Activated CD4-positive, alpha-beta T cell treated with anti-CD3 and anti-CD28 coated beads for 36 hours (primary cell): ENCODE measurements at regions of chr1 and their contacts with region 1.

Region 1: GRCh38 chr1:44807262-44808062 is at the start of gene DYNLT4:
- DNase-seq: peak; percentile 94
- ATAC-seq: peak; percentile 57
- H3K4me3 Mint-ChIP-seq: peak within 1 kb of the TSS; percentile 87
- H3K27ac Mint-ChIP-seq: peak within 1 kb of the TSS; percentile 99
- H3K4me1 Mint-ChIP-seq: peaks cover 92% of the 10 kb centered on the region
- H3K27me3 Mint-ChIP-seq: no peaks in the 10 kb centered on the region
- total RNA-seq, gene DYNLT4: 0.32 TPM in 1 of 2 experiments, not detected in the other

Region 2: DNA sequence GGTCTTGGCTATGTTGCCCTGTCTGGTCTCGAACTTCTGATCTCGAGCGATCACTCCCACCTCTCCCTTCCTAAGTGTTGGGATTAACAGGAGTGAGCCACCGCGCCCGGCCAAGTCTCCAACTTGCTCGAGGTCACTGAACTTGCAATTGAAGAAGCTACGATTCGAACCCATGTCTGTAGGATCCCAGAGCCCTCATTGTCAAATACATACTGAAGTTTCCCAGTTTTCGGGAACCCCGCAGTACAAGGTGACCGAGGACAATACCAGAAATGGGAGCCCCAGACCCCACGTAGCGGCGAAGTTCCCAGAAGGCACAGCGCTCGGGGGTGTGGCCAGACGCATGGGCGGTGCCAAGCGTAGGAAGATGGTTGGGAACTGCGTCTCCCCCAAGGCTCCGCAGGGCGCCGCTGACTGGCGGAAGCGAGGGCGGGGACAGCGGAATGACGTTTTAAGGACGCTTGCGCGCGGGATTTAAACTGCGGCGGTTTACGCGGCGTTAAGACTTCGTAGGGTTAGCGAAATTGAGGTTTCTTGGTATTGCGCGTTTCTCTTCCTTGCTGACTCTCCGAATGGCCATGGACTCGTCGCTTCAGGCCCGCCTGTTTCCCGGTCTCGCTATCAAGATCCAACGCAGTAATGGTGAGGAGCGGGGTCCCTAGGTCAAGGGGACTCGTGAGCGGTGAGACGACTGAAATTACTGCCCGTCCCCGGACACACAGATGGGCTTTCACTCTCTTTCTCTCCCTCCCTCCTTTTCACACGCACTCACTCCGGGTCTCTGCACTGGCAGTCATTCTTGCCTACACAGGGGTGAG is 67.9 kb before region 1 on chr1 and contains the start of gene KIF2C:
- CTCF ChIA-PET with region 1: interaction called, 3 read pairs
- POLR2A ChIA-PET with region 1: interaction called, 6 read pairs
- intact Hi-C with region 1: loop called in 1 of 2 experiments (anchors 1 kb)
- DNase-seq: peak; percentile 99
- ATAC-seq: peak; percentile 98
- H3K4me3 Mint-ChIP-seq: peak within 1 kb of the TSS; percentile 98
- H3K27ac Mint-ChIP-seq: peak within 1 kb of the TSS; percentile 94
- H3K4me1 Mint-ChIP-seq: peaks cover 26% of the 10 kb centered on the region
- H3K27me3 Mint-ChIP-seq: no peaks in the 10 kb centered on the region
- total RNA-seq, gene KIF2C: 101 to 119 TPM

Region 3: GRCh38 chr1:44780583-44781121 is 26.8 kb before region 1 on chr1:
- CTCF ChIA-PET with region 1: interaction called, 12 read pairs
- POLR2A ChIA-PET with region 1: interaction called, 26 read pairs
- intact Hi-C with region 1: loop called in 1 of 2 experiments (anchors 2 kb)
- DNase-seq: no peak
- ATAC-seq: no peak
- H3K4me3 Mint-ChIP-seq: no peak overlapping the region
- H3K27ac Mint-ChIP-seq: no peak overlapping the region
- H3K4me1 Mint-ChIP-seq: peaks cover 50% of the 10 kb centered on the region
- H3K27me3 Mint-ChIP-seq: no peaks in the 10 kb centered on the region

Region 4: DNA sequence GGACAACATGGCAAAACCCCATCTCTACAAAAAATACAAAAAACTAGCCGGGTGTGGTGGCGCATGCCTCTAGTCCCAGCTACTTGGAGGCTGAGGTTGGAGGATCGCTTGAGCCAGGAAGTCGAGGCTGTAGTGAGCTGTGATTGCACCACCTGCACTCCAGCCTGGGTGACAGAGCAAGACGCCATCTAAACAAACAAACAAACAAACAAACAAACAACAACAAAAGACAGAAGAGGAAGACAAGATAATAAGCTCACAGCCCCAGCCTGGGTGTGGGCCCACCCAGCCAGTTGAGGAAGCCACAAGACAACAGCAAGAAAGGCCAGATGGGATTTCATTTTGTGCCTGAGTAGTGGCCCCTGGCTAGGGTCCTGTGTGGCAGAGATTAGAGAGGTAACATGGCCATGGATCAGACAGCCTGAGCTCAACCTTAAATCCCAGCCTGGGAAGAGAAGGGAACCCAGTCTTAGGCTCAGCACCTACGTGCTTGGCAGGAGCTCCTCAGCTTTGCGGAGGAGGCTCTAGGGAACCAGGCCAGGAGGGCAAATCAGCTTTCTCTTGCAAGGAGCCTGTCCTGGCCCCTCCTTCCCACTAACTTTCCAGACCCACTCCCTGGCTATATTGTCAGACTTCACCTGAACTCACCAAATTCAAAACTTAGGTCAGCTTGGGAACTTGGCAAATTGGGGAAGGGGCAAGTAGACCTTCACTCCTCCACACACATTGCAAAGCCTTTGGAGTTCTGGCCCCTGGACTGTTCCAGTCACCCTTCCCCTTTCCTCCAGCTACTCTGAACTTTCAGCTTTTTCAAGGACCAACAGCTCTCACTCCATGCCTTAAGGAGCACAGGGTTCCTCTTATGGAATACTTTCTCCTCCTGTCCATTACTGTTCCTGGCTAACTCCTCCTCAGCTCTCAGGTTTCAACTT is 14.4 kb before region 1 on chr1:
- CTCF ChIA-PET with region 1: interaction called, 5 read pairs
- POLR2A ChIA-PET with region 1: interaction called, 13 read pairs
- intact Hi-C with region 1: no loop called
- DNase-seq: peak; percentile 4
- ATAC-seq: no peak
- H3K4me3 Mint-ChIP-seq: no peak overlapping the region
- H3K27ac Mint-ChIP-seq: no peak overlapping the region
- H3K4me1 Mint-ChIP-seq: no peaks in the 10 kb centered on the region
- H3K27me3 Mint-ChIP-seq: no peaks in the 10 kb centered on the region

Region 5: DNA sequence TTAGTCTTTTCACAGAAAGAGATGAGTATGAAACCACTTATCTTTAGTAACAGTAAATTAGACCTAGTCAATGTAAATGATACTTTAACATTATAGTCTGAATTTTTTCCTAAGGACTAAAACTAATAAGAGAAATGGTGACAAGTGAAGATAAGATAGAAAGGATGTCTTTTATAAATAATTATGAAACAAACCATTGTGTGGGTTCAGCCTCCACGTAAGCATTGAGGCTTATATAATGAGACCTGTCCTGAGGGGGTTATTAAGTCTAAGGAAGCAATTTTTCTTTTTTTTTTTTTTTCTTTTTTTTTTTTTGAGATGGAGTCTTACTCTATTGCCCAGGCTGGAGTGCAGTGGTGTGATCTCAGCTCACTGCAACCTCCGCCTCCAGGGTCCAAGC is 260.3 kb after region 1 on chr1:
- CTCF ChIA-PET with region 1: no interaction called
- POLR2A ChIA-PET with region 1: no interaction called
- intact Hi-C with region 1: no loop called
- DNase-seq: no peak
- ATAC-seq: no peak
- H3K4me3 Mint-ChIP-seq: no peak overlapping the region
- H3K27ac Mint-ChIP-seq: no peak overlapping the region
- H3K4me1 Mint-ChIP-seq: peaks cover 2% of the 10 kb centered on the region
- H3K27me3 Mint-ChIP-seq: peaks cover 4% of the 10 kb centered on the region